ENCODE measurements at regions of chr19 and their contacts with region 1.

Region 1: GRCh38 chr19:51338563-51339312 is 3.2 kb downstream of the VSIG10L start:
- DNase-seq: peak; percentile 93
- ATAC-seq: peak; percentile 80
- H3K4me3 Mint-ChIP-seq: peak overlapping the region; percentile 84
- H3K27ac Mint-ChIP-seq: peak overlapping the region; percentile 84
- H3K4me1 Mint-ChIP-seq: peaks cover 13% of the 10 kb centered on the region
- H3K27me3 Mint-ChIP-seq: peaks cover 12% of the 10 kb centered on the region

Region 2: GRCh38 chr19:51253088-51253806 is 85.5 kb before region 1 on chr19:
- CTCF ChIA-PET with region 1: no interaction called
- DNase-seq: no peak
- ATAC-seq: peak; percentile 32
- H3K4me3 Mint-ChIP-seq: no peak overlapping the region
- H3K27ac Mint-ChIP-seq: peak overlapping the region; percentile 92
- H3K4me1 Mint-ChIP-seq: peaks cover 80% of the 10 kb centered on the region
- H3K27me3 Mint-ChIP-seq: no peaks in the 10 kb centered on the region

Region 3: DNA sequence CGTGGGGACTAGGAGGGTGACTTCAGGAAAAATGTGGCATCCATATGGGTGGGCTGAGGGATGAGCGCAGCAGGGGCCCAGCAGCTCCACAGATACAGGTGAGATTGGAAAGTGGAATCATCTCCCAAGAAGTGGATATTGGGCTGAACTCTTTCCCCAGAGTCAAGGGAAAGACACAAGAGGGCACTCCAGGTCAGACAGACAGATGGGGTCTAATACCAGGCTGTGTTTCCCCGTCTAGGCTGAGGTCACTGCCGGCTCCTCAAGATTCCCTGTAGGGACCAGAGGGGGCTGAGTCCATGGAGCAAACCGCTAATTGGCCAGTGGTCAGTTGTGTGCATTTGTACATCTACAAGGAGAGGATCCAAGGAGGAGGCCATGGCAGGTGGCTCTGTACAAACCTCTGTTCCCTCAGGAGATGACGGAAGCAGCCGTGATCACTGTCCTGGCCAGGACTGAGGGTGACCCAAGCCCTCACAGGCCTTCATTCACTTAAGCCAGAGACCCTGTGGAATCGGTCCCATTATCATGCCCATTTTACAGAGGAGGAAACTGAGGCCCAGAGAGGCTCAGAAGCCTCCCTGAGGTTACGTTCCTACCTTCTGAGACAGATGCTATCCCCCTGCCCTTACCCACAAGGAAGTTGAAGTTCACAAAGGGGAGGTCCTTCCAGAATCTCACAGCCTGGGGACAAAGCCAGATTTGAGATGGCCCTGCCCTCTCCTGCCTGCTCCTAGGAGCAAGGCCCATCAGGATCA is 42.2 kb before region 1 on chr19:
- CTCF ChIA-PET with region 1: no interaction called
- DNase-seq: no peak
- ATAC-seq: no peak
- H3K4me3 Mint-ChIP-seq: no peak overlapping the region
- H3K27ac Mint-ChIP-seq: no peak overlapping the region
- H3K4me1 Mint-ChIP-seq: no peaks in the 10 kb centered on the region
- H3K27me3 Mint-ChIP-seq: peaks cover 1% of the 10 kb centered on the region

Region 4: DNA sequence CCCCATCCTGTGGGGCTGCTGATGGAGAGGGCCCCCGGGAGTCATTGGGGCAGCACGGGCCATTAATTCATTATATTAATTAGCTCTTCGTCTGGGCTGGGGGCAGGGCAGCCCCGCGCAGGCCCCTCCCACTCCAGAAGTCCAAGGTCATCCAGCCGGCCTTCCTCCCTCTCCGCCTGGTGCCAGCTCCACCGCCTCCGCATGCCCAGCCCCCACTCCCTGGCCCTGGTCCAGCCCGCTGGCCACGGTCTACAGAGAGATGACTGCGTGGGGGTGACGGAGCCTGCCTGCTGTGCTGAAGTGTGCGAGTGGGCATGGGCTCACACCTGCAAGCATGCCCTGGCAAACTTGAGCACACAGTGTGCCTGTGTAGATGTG is 18.5 kb before region 1 on chr19:
- CTCF ChIA-PET with region 1: no interaction called
- DNase-seq: no peak
- ATAC-seq: no peak
- H3K4me3 Mint-ChIP-seq: no peak overlapping the region
- H3K27ac Mint-ChIP-seq: no peak overlapping the region
- H3K4me1 Mint-ChIP-seq: peaks cover 1% of the 10 kb centered on the region
- H3K27me3 Mint-ChIP-seq: peaks cover 19% of the 10 kb centered on the region

Region 5: GRCh38 chr19:51367565-51368365 is 29.0 kb after region 1 on chr19:
- CTCF ChIA-PET with region 1: interaction called, 14 read pairs
- DNase-seq: peak; percentile 100
- ATAC-seq: peak; percentile 76
- H3K4me3 Mint-ChIP-seq: peak overlapping the region; percentile 97
- H3K27ac Mint-ChIP-seq: peak overlapping the region; percentile 98
- H3K4me1 Mint-ChIP-seq: peaks cover 42% of the 10 kb centered on the region
- H3K27me3 Mint-ChIP-seq: no peaks in the 10 kb centered on the region

Region 6: DNA sequence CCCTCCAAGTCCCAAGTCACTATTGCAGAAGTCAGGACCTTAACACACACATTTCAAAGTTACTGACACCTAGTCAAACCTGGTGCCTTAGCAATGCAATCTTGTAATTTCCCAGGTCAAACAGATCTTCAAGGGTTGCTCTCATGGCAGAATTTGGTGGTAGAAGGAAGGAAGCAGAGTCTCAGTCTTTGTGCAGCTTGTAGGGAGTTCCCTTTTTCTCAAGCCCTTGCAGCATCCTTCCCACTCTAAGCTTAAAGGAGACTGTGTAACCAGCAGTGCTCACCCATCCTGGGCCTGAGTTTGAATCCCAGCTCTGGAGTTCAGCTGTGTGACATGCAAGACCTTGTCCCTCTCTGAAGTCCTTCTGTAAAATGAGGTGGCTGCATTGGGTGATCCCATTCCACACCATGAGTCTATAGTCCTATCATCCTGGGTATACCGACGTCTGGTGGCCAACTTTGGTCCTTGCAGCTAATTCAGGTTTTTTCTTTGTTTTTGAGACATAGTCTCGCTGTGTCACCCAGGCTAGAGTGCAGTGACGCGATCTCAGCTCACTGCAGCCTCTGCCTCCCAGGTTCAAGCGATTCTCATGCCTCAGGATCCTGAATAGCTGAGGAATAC is 68.9 kb after region 1 on chr19:
- CTCF ChIA-PET with region 1: interaction called, 11 read pairs
- DNase-seq: peak; percentile 62
- ATAC-seq: peak; percentile 60
- H3K4me3 Mint-ChIP-seq: no peak overlapping the region
- H3K27ac Mint-ChIP-seq: no peak overlapping the region
- H3K4me1 Mint-ChIP-seq: peaks cover 10% of the 10 kb centered on the region
- H3K27me3 Mint-ChIP-seq: no peaks in the 10 kb centered on the region

Region 7: GRCh38 chr19:51441410-51442390 is 103.0 kb after region 1 on chr19:
- CTCF ChIA-PET with region 1: interaction called, 103 read pairs
- DNase-seq: peak; percentile 99
- ATAC-seq: peak; percentile 91
- H3K4me3 Mint-ChIP-seq: peak overlapping the region; percentile 68
- H3K27ac Mint-ChIP-seq: peak overlapping the region; percentile 82
- H3K4me1 Mint-ChIP-seq: peaks cover 39% of the 10 kb centered on the region
- H3K27me3 Mint-ChIP-seq: peaks cover 31% of the 10 kb centered on the region